Left cardiac atrium (tissue), 4 donors: ENCODE measurements at regions of chr6 and their contacts with region 1.

Region 1: DNA sequence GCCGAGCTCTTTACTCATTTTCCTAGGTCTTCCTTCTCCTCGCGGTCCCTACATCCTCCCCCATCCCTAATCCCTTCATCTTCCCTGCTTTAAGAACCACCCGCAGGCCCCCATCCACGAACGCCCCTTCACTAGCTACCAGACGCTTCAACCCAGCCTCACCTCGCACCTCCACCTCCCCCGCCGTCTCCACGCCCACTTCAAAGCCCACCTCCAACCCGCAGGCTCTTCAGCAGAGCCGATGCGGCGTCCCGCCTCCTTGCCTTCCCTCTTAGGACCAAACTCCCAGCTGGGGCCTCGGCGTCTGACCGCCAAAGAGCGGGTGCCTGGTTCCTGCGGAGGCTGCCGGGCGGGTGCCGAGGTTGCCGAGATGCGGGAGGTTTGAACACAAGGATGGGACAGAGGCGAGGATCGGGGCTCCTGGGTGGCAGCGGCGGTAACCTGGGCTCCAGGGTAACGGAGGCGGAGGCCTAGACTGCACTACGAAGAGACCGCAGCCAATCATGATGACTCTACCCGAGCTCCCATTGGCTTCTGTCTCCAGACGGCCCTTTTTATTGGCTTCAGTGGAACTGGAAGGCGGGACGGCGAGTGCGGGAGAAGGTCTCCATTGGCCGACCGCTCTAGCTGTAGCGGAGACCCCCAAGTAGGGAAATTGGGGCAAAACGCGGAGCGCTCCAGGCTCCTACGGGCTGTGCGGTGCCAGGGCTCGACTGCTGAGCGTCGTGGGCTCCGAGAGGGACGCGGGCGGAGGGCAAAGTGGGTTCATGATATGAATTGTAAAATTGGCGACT is at the start of gene LCA5:
- DNase-seq: peak; percentile 94
- ATAC-seq: peak; percentile 99
- total RNA-seq, gene LCA5: 2.2 to 3.0 TPM

Region 2: DNA sequence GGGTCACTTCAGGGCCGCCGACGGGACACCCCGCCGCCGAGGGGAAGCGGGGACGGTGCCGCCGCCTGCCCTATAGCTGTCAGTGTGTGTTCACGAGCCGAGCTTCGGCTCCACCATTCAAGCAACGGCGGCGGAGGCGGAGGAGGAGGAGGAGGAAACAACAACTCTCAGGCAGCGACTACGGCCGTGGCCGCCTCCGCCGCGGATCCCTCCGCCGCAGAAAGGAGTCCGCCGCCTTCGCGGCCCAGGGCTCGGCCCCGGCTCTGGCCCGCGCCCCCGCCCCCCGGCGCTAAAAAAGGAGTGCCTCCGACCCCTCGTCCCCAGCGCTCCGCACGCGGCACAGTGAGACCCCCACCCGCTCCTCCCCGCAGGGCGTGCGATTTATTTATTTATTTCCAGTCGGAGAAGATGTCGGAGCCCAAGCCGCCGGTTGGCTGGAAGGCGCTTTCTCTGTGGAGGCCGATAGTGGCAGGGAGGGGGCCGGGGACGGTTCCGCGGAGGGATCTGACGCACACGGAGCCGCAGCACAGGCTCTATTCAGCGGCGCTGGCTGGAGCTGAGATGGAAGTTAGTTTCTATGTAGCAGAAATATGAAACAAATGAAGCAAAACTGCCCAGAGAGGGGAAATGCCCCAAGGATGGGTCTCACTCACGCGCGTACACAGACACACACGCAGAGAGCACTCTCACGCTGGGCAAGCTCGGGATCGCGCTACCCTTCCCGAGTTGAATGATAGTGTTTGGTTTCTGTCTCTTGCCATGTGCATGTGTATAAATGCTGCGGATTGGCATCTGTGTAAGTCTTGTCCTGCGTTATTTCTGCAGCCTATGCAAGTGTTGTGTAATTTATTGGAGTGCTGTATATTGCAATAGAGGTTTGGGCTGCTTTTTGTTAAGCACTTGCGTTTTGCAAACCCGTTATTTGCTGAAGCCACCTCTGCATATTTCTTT is 458.8 kb before region 1 on chr6 and contains the start of gene PHIP:
- intact Hi-C with region 1: loop called in 1 of 2 experiments (anchors 10 kb)
- DNase-seq: peak; percentile 95
- ATAC-seq: peak; percentile 93 to 95
- total RNA-seq, gene PHIP: 14.6 to 17.1 TPM

Region 3: DNA sequence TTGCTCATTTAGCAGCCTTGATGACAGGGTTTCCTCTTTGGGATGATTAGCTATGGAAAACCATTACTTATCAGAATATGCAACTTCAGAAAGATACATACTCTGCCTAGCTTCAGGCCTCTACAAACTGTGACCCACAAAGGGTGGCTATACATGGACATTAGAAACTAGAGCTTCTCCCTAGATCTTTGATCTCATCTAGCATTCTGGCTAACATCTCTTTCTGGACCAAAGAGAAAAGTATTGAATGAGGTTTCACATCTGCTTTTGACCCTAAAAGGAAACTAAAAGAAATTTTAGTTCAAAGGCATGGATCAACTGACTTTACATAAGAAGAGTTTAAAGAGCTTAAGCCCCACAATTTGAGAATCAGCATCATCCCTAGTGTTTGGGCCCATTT is 290.3 kb before region 1 on chr6:
- intact Hi-C with region 1: loop called in 1 of 2 experiments (anchors 10 kb)
- DNase-seq: no peak
- ATAC-seq: no peak